ENCODE measurements at regions of chr14 and their contacts with region 1.

Region 1: DNA sequence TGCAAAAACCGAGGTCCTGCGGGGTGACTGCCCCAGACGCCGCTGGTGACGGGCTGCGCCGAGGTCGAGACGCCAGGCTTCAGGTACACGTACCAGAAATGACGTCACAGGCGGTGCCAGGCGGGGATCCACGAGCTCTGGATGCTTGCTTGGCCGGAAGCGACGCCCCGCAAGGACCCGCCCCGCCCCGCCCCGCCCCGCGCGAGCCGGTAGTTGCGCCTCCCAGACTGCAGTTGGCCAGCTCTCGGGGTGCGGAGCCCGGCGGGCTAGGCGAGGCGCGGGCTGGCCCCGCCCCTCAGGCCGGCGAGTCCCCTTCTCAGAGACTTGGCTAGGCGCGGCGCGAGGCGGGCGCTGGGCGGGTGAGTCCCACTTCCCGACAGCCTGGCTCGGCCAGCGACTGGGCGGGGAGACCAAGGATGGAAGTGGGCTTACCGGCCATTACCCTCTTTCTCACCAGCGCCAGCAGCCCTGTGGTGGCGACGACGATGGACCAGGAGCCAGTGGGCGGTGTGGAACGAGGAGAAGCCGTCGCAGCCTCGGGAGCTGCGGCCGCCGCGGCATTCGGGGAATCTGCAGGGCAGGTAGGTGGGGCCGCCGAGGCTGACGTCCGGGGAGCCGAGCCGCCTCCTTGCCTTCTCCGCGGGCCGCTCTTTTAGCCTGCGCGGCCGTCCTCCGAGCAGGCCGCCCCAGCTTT is at the start of gene FAM177A1:
- DNase-seq: peak; percentile 97
- H3K4me3 Mint-ChIP-seq: peak within 1 kb of the TSS; percentile 94
- H3K27ac Mint-ChIP-seq: peak within 1 kb of the TSS; percentile 98
- H3K4me1 Mint-ChIP-seq: peaks cover 24% of the 10 kb centered on the region
- H3K27me3 Mint-ChIP-seq: no peaks in the 10 kb centered on the region
- CTCF ChIP-seq: no peak
- total RNA-seq, gene FAM177A1: 73.9 and 74.6 TPM in 2 replicates

Region 2: GRCh38 chr14:35020713-35021112 is 25.5 kb before region 1 on chr14:
- CTCF ChIA-PET with region 1: no interaction called
- POLR2A ChIA-PET with region 1: interaction called, 14 read pairs
- intact Hi-C with region 1: no loop called
- DNase-seq: no peak
- H3K4me3 Mint-ChIP-seq: no peak overlapping the region
- H3K27ac Mint-ChIP-seq: peak overlapping the region; percentile 60
- H3K4me1 Mint-ChIP-seq: no peaks in the 10 kb centered on the region
- H3K27me3 Mint-ChIP-seq: no peaks in the 10 kb centered on the region
- CTCF ChIP-seq: no peak

Region 3: DNA sequence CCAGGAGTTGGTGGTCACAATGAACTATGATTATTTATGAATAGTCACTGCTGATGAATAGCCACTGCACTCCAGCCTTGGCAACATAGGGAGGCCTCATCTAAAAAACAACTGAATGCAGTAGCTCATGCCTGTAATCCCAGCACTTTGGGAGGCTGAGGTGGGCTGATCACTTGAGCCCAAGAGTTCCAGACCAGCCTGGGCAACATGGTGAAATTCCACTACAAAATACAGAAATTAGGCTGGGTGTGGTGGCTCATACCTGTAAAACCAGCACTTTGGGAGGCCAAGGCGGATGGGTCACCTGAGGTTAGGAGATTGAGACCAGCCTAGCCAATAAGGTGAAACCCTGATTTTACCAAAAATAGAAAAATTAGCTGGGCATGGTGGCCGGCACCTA is 13.6 kb before region 1 on chr14:
- CTCF ChIA-PET with region 1: no interaction called
- POLR2A ChIA-PET with region 1: interaction called, 11 read pairs
- intact Hi-C with region 1: no loop called
- DNase-seq: no peak
- H3K4me3 Mint-ChIP-seq: no peak overlapping the region
- H3K27ac Mint-ChIP-seq: no peak overlapping the region
- H3K4me1 Mint-ChIP-seq: no peaks in the 10 kb centered on the region
- H3K27me3 Mint-ChIP-seq: no peaks in the 10 kb centered on the region
- CTCF ChIP-seq: no peak

Region 4: GRCh38 chr14:35068238-35069012 is 22.2 kb after region 1 on chr14:
- CTCF ChIA-PET with region 1: no interaction called
- POLR2A ChIA-PET with region 1: interaction called, 14 read pairs
- intact Hi-C with region 1: no loop called
- DNase-seq: no peak
- H3K4me3 Mint-ChIP-seq: no peak overlapping the region
- H3K27ac Mint-ChIP-seq: no peak overlapping the region
- H3K4me1 Mint-ChIP-seq: peaks cover 5% of the 10 kb centered on the region
- H3K27me3 Mint-ChIP-seq: no peaks in the 10 kb centered on the region
- CTCF ChIP-seq: no peak

Region 5: GRCh38 chr14:35121887-35122695 is 75.9 kb after region 1 on chr14 and contains the starts of genes PPP2R3C and PRORP:
- CTCF ChIA-PET with region 1: interaction called, 3 read pairs
- POLR2A ChIA-PET with region 1: interaction called, 80 read pairs
- intact Hi-C with region 1: loop called (anchors 1 kb)
- DNase-seq: peak; percentile 99
- H3K4me3 Mint-ChIP-seq: peak within 1 kb of the TSS; percentile 98
- H3K27ac Mint-ChIP-seq: peak within 1 kb of the TSS; percentile 100
- H3K4me1 Mint-ChIP-seq: peaks cover 31% of the 10 kb centered on the region
- H3K27me3 Mint-ChIP-seq: no peaks in the 10 kb centered on the region
- CTCF ChIP-seq: no peak
- total RNA-seq, gene PPP2R3C: 16.9 and 21.6 TPM in 2 replicates
- total RNA-seq, gene PRORP: 27.9 and 30.5 TPM in 2 replicates

Region 6: GRCh38 chr14:35808076-35808652 is 762.0 kb after region 1 on chr14:
- CTCF ChIA-PET with region 1: no interaction called
- POLR2A ChIA-PET with region 1: no interaction called
- intact Hi-C with region 1: no loop called
- DNase-seq: peak; percentile 74
- H3K4me3 Mint-ChIP-seq: peak overlapping the region; percentile 95
- H3K27ac Mint-ChIP-seq: peak overlapping the region; percentile 7
- H3K4me1 Mint-ChIP-seq: peaks cover 11% of the 10 kb centered on the region
- H3K27me3 Mint-ChIP-seq: no peaks in the 10 kb centered on the region
- CTCF ChIP-seq: no peak

Measured in MCF 10A (cell line).